ENCODE measurements at regions of chr2 and their contacts with region 1.

Region 1: GRCh38 chr2:202178342-202178958 is 59.9 kb downstream of the SUMO1 start:
- DNase-seq: peak in 1 of 2 donors; percentile 64
- H3K4me3 ChIP-seq: no peak overlapping the region
- H3K27ac ChIP-seq: no peak overlapping the region
- H3K4me1 ChIP-seq: no peaks in the 10 kb centered on the region
- H3K27me3 ChIP-seq: no peaks in the 10 kb centered on the region
- CTCF ChIP-seq: peak; percentile 80 to 88

Region 2: GRCh38 chr2:201795607-201796477 is 382.6 kb before region 1 on chr2:
- intact Hi-C with region 1: loop called (anchors 5 kb)
- DNase-seq: no peak
- H3K4me3 ChIP-seq: no peak overlapping the region
- H3K27ac ChIP-seq: peak overlapping the region in 1 of 2 donors; percentile 67
- H3K4me1 ChIP-seq: peaks cover 0 to 30% (median 1%) of the 10 kb centered on the region in 4 donors
- H3K27me3 ChIP-seq: no peaks in the 10 kb centered on the region
- CTCF ChIP-seq: peak; percentile 62 to 69

Region 3: DNA sequence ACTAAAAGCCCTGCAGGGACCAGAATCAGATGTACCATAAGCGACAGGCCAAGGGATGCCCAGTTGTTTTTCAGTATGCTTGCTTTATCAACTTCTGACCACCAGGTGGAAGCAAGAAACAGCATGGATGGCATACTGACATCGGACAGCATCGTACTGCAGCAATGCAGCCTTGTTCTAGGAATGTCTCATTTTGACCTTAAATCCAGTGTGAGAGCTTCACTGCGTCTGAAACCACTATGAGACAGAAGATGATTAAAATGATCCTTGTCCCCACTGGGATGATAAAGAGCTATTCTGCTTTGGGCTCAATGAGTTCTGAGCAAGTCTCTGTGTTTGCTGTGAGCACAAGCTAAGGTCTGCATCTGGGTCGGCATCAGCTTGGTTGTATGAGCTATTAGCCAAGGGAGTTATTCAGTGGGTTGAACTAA is 317.8 kb before region 1 on chr2:
- intact Hi-C with region 1: loop called (anchors 5 kb)
- DNase-seq: peak in 1 of 2 donors; percentile 28
- H3K4me3 ChIP-seq: no peak overlapping the region
- H3K27ac ChIP-seq: no peak overlapping the region
- H3K4me1 ChIP-seq: no peaks in the 10 kb centered on the region
- H3K27me3 ChIP-seq: no peaks in the 10 kb centered on the region
- CTCF ChIP-seq: peak; percentile 75 to 87

Measured in tibial artery (tissue), 4 donors.